A673 (cell line): ENCODE measurements at regions of chrX and their contacts with region 1.

Region 1: DNA sequence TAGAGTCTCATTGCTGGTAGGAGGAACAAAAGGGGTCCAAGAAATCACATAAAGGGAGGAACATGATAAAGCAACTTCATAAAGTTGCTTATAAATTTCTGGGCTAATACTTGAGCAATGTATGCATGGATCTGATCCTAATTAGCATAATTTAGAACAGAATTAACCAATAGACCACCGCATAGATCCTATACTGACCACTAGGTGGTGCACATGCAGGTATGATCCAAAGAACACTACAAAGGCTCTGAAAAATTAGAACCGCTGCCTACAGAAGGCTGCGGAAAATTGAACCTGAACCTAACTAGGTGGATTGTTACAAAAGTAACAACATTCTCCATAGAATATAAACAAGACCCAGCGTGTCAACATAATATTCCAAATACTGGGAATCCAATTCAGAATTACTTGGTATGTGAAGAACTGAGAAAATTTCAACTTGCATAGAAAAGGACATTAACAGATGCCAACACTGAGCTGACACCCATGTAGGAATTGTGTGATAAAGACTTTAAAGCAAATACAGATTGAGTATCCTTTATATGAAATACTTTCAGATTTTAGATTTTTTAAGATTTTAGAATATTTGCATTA is 23.3 kb downstream of the BRCC3 start:
- DNase-seq: peak; percentile 48
- H3K4me3 ChIP-seq: no peak overlapping the region
- H3K27ac ChIP-seq: no peak overlapping the region
- H3K4me1 ChIP-seq: no peaks in the 10 kb centered on the region
- H3K27me3 ChIP-seq: no peaks in the 10 kb centered on the region
- CTCF ChIP-seq: peak; percentile 76

Region 2: GRCh38 chrX:155819966-155820491 is 725.5 kb after region 1 on chrX:
- CTCF ChIA-PET with region 1: no interaction called
- POLR2A ChIA-PET with region 1: no interaction called
- intact Hi-C with region 1: loop called (anchors 1 kb)
- DNase-seq: peak; percentile 79
- H3K4me3 ChIP-seq: no peak overlapping the region
- H3K27ac ChIP-seq: no peak overlapping the region
- H3K4me1 ChIP-seq: no peaks in the 10 kb centered on the region
- H3K27me3 ChIP-seq: no peaks in the 10 kb centered on the region
- CTCF ChIP-seq: peak; percentile 70